GM13976 (cell line): ENCODE measurements at regions of chr17 and their contacts with region 1.

Region 1: DNA sequence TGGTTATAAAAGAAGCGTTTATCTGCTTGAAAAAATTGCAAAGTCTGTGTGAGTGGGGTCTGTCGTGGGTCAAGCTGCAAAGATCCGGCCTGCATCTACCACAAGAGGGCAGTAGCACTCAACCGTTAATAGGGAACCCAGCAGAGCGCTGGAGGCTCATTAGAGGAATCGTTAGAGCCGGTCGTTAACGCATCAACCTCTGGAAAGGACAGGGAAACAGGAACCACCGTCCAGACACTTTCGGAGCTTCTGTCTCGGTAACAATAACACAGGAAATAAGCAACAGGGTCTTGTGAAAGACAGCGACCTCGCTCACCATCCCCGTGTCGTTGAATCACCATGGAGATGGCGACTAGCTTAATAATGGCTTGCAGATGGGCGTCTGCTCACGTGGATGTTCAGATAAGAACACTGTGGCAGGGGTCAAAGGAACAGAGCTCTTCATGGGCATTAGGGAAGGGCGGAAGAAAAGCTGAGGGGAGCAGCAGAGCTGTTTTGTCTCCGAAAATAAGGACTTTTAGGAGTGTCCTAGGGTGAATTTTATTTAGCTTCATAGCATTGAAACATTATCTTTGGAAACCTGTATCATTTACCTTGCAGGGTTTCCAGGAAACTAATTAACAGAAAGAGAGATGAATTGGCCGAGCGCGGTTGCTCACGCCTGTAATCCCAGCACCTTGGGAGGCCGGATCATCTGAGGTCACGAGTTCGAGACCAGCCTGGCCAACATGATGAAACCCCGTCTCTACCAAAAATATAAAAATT is 11.9 kb upstream of the NSRP1 start:
- DNase-seq: peak; percentile 66
- CTCF ChIP-seq: peak; percentile 84

Region 2: GRCh38 chr17:30336369-30337171 is 231.8 kb after region 1 on chr17:
- in situ Hi-C with region 1: loop called (anchors 5 kb)
- DNase-seq: peak; percentile 41
- CTCF ChIP-seq: peak; percentile 59